HCT116 (cell line): ENCODE measurements at regions of chr17 and their contacts with region 1.

Region 1: DNA sequence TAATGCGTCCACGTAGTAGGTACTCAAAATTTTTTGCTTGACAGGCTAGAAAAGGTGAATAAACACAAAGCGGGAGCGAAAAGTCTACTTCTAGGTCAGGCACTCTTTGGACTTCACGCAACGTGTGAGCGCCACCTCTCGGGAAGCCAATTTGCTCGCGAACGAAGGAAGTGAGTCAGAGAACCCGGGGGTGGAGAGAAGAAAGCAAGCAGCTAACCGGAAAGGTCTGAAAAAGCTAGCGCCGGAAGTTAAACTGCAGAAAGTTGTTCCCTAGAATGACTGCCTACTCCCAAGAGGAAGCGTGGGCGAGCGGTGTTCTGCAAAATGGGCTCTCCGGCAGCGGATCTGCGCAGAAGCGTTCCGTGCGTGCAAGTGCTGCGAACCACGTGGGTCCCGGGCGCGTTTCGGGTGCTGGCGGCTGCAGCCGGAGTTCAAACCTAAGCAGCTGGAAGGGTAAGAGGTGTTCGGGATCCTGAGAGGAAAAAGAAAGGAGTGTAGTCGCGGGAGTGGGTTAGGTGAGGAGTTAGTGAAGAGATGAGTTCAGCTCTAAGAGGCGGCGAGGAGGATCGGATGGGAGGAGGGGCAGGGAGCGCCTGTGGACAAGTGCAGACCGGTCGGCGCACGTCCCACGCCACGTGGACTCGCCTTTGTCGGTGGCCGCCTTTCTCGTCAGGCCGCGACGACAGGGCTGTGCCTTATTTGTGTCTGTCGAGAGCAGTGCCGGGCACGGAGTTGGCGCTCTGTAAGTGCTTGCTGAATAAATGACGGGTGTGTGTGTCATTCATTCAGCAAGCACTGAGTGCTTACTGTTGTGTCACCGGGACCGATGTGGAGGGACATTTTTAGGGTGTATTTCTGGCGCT is at the start of gene NME1:
- DNase-seq: peak; percentile 100
- ATAC-seq: peak; percentile 92
- H3K4me3 ChIP-seq: peak within 1 kb of the TSS; percentile 74 to 82
- H3K27ac ChIP-seq: peak within 1 kb of the TSS; percentile 69
- H3K4me1 ChIP-seq: peaks cover 14 to 22% of the 10 kb centered on the region in 2 experiments
- H3K27me3 ChIP-seq: no peaks in the 10 kb centered on the region
- CTCF ChIP-seq: peak; percentile 97 to 100 (median 98)
- POLR2A ChIP-seq: peak; percentile 78
- RAD21 ChIP-seq: peak; percentile 100
- total RNA-seq, gene NME1: 510 TPM

Region 2: GRCh38 chr17:50853015-50853615 is 300.3 kb before region 1 on chr17:
- CTCF ChIA-PET with region 1: interaction called, 9 read pairs
- POLR2A ChIA-PET with region 1: interaction called, 4 read pairs
- RAD21 ChIA-PET with region 1: interaction called in 1 of 2 experiments, 7 read pairs
- intact Hi-C with region 1: loop called (anchors 5 kb)
- DNase-seq: no peak
- ATAC-seq: no peak
- H3K4me3 ChIP-seq: no peak overlapping the region
- H3K27ac ChIP-seq: no peak overlapping the region
- H3K4me1 ChIP-seq: peaks cover 5 to 11% of the 10 kb centered on the region in 2 experiments
- H3K27me3 ChIP-seq: no peaks in the 10 kb centered on the region
- CTCF ChIP-seq: no peak
- POLR2A ChIP-seq: no peak
- RAD21 ChIP-seq: no peak

Region 3: DNA sequence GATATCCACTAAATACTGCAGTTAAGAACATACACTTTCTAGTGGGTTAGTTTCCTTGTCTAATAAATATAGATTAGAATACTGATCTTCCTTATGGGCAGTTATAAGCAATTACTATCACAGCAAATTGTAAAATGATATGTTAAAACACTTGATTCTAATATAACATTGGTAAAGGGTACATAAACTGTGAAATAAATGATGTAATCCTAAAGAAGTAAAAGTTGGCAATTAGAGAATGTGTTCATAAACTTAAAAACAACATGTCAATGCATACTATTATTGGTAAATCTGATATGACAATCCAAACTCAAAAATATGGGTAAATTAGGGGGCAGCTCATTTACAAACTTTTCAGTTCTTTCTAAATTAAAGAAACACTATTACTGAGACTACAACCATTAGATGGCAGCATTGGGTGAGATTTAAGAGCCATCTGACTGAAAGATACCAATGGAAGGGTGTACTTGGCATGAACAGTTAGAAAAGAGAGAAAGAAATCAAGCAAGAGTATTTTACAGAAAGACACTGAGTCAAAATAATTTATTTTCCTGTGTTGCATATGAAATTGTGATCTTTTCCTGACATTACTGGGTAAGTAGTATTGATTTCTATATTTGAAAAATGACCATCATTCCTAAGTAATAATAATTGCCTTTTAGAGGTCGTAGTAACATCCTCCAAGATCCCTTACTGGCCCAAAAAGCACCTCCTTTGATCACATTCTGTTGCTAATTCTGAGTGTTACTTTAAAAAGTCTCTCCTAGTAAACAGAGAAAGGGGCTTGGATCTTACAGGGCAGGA is 152.4 kb before region 1 on chr17:
- CTCF ChIA-PET with region 1: interaction called, 88 read pairs
- POLR2A ChIA-PET with region 1: interaction called, 4 read pairs
- RAD21 ChIA-PET with region 1: interaction called, 4 to 6 read pairs
- intact Hi-C with region 1: loop called (anchors 1 kb)
- DNase-seq: peak; percentile 61
- ATAC-seq: peak; percentile 87
- H3K4me3 ChIP-seq: no peak overlapping the region
- H3K27ac ChIP-seq: no peak overlapping the region
- H3K4me1 ChIP-seq: no peaks in the 10 kb centered on the region
- H3K27me3 ChIP-seq: no peaks in the 10 kb centered on the region
- CTCF ChIP-seq: peak; percentile 34 to 89 (median 82); a peak in 5 of 6 replicates
- POLR2A ChIP-seq: no peak
- RAD21 ChIP-seq: peak; percentile 88

Region 4: GRCh38 chr17:51120739-51121617 is 32.5 kb before region 1 on chr17 and contains the start of gene SPAG9:
- CTCF ChIA-PET with region 1: interaction called, 43 read pairs
- POLR2A ChIA-PET with region 1: interaction called, 24 read pairs
- RAD21 ChIA-PET with region 1: interaction called, 7 to 8 read pairs
- intact Hi-C with region 1: loop called (anchors 1 kb)
- DNase-seq: peak; percentile 95
- ATAC-seq: peak; percentile 79
- H3K4me3 ChIP-seq: peak within 1 kb of the TSS; percentile 91 to 92
- H3K27ac ChIP-seq: peak within 1 kb of the TSS; percentile 87
- H3K4me1 ChIP-seq: peaks cover 39 to 54% of the 10 kb centered on the region in 2 experiments
- H3K27me3 ChIP-seq: no peaks in the 10 kb centered on the region
- CTCF ChIP-seq: no peak
- POLR2A ChIP-seq: peak; percentile 45
- RAD21 ChIP-seq: 0 out of 2 replicates have a peak, but pooled peaks have one; percentile 13
- total RNA-seq, gene SPAG9: 77.6 TPM

Region 5: DNA sequence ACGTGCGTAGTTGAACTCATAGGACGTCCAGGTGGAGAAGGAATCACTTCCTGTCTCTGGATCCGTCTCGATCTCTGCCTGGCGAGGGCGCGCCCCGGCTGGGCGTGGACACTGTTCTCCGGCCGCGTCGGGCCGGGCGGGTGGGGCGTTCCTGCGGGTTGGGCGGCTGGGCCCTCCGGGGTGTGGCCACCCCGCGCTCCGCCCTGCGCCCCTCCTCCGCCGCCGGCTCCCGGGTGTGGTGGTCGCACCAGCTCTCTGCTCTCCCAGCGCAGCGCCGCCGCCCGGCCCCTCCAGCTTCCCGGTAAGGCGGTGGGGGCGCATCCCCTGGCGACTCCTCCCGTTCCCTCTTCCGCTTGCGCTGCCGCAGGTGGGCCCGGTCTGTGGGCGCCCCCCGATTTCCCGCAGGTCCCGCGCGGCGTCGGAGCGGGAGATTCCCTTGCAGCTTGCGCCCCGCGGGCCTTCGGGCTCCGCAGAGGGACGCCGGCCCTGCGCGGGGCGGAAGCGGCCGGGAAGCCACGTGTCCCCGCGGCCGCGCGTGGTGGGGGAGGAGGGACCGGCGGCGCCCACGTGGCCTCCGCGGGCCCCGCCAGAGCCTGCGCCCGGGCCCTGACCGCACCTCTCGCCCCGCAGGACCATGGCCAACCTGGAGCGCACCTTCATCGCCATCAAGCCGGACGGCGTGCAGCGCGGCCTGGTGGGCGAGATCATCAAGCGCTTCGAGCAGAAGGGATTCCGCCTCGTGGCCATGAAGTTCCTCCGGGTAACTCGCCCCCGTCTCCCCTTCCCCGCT is 13.0 kb after region 1 on chr17 and contains the start of gene NME2:
- CTCF ChIA-PET with region 1: interaction called, 14 read pairs
- POLR2A ChIA-PET with region 1: interaction called, 8 read pairs
- RAD21 ChIA-PET with region 1: interaction called in 1 of 2 experiments, 5 read pairs
- intact Hi-C with region 1: no loop called
- DNase-seq: peak; percentile 76
- ATAC-seq: peak; percentile 90
- H3K4me3 ChIP-seq: peak within 1 kb of the TSS; percentile 90 to 91
- H3K27ac ChIP-seq: peak within 1 kb of the TSS; percentile 96
- H3K4me1 ChIP-seq: peaks cover 13 to 24% of the 10 kb centered on the region in 2 experiments; a peak in 3 of 4 replicates
- H3K27me3 ChIP-seq: no peaks in the 10 kb centered on the region
- CTCF ChIP-seq: no peak
- POLR2A ChIP-seq: peak; percentile 46
- RAD21 ChIP-seq: no peak
- total RNA-seq, gene NME2: 1,287 TPM